Activated naive CD4-positive, alpha-beta T cell treated with anti-CD3 and anti-CD28 coated beads for 36 hours (primary cell): ENCODE measurements at regions of chr9 and their contacts with region 1.

Region 1: DNA sequence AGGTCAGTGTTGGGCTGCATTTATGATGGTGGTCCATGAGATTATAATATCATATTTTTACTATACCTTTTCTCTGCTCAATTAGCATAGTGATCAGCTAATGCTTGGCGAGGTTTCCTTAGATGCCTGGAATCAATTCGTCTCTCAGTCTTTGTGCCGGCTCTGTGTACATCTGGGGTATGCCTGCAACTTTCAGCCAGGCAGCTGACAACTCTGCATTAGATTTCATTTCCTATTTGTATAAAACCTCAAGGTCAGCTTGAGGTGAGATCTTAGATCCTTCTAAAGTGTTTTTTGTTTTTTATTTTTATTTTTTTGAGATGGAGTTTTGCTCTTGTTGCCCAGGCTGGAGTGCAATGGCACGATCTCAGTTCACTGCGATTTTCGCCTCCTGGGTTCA is 86.8 kb downstream of the MELK start:
- DNase-seq: no peak
- H3K4me3 Mint-ChIP-seq: no peak overlapping the region
- H3K27ac Mint-ChIP-seq: no peak overlapping the region
- H3K4me1 Mint-ChIP-seq: no peaks in the 10 kb centered on the region
- H3K27me3 Mint-ChIP-seq: no peaks in the 10 kb centered on the region

Region 2: GRCh38 chr9:36479101-36479500 is 180.4 kb before region 1 on chr9:
- CTCF ChIA-PET with region 1: no interaction called
- intact Hi-C with region 1: no loop called
- DNase-seq: no peak
- H3K4me3 Mint-ChIP-seq: no peak overlapping the region
- H3K27ac Mint-ChIP-seq: no peak overlapping the region
- H3K4me1 Mint-ChIP-seq: peaks cover 28% of the 10 kb centered on the region
- H3K27me3 Mint-ChIP-seq: no peaks in the 10 kb centered on the region

Region 3: DNA sequence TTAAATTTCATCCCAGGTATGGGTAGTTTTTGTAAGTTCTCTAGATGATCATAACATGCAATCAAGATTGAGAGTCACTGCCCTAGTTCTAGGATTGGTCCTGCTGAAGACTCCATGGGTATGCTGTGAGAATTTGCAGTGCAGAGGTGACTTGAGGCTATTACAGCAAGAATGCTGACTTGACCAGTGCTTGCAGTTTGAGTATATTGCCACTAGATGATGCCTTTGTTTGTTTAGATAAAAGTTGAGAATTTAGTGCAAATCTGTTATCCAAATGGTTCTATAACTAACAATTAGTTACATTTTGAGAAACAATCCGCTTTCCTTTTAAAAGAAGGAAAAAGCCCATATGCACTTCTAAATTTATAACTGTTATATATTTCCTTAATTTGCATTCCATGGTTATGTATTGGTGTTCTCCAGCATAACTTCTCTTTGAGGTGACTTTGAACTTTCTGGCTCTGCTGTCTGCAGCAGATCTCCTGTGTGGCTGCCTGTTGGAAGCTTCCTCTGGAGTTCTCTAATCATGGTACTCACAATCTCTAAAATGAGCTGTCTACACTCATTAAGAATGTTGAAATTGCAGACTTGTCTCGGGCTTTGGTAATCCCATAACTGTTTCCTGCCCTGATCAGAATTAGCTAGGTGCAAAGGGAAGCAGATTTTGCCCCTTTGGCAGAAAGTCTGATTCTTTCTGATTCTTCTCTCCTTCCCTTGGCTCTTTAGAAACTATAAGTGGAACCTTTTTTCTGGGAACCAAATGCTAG is 61.9 kb before region 1 on chr9:
- CTCF ChIA-PET with region 1: no interaction called
- intact Hi-C with region 1: loop called (anchors 10 kb)
- DNase-seq: no peak
- H3K4me3 Mint-ChIP-seq: no peak overlapping the region
- H3K27ac Mint-ChIP-seq: no peak overlapping the region
- H3K4me1 Mint-ChIP-seq: no peaks in the 10 kb centered on the region
- H3K27me3 Mint-ChIP-seq: no peaks in the 10 kb centered on the region